ENCODE measurements at regions of chr3 and their contacts with region 1.

Region 1: DNA sequence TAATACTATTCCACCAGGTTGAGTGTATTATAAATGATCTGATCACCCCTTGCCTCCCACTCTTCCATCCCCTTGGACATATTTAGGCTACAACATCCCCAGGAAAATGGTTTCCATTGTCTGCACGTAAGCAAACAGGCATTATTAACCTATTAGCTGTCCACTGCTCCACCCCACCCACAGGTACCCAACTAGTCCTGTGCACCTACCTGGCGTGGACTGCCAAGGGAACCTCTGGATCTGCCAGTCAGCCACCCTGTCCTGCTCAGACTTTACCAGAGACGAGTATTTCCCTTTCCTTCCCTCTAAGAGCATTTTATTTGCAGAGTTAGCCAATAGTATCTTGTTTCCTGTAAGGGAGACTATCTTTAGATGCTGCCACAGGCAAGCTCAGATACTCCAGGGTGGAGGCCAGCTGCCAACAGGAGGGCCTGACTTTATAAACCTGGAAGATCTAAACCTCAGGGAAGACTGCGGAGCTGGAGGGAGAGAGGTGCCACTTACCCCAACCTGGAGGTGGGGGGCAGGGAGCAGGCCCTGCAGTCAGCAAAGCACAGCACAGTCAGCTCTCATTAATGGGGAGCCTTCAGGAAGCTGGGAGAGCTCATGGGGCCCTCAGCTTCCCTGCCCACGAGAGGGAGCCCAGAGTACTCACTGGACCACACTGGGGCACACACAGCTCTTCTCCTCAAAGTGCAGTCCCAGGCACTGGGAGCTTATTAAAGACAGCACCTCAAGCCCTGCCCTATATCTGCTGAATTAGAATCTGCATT is at the start of gene CX3CR1:
- DNase-seq: no peak
- H3K4me3 ChIP-seq: no peak within 1 kb of the TSS
- H3K27ac ChIP-seq: no peak within 1 kb of the TSS
- H3K4me1 ChIP-seq: no peaks in the 10 kb centered on the region
- H3K27me3 ChIP-seq: peaks cover 20% of the 10 kb centered on the region
- total RNA-seq, gene CX3CR1: not detected in 2 replicates

Region 2: DNA sequence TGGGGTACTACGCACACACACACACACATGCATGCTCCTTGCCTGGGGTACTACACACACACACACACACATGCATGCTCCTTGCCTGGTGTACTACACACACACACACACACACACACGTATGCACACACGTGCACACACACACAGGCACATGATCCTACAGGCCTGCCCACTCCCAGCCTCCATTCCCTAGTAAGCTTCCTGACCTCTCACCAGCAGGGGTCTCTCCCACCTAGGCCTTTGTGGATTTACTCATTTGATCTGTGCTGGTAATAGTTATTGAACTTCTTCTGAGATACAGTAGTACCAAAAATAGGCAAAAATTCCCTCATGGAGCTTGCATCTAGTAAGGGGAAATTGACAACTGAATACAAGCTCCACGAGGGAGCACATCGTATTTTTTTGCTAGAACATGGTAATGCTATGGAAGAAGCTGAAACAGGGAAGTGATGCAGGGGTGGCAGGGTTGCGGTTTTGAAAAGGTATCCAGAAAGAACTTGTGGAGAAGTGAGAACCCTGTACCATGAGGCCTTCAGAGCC is 153.3 kb before region 1 on chr3:
- in situ Hi-C with region 1: loop called (anchors 10 kb)
- DNase-seq: peak; percentile 51
- H3K4me3 ChIP-seq: no peak overlapping the region
- H3K27ac ChIP-seq: no peak overlapping the region
- H3K4me1 ChIP-seq: peaks cover 8% of the 10 kb centered on the region
- H3K27me3 ChIP-seq: no peaks in the 10 kb centered on the region

Region 3: DNA sequence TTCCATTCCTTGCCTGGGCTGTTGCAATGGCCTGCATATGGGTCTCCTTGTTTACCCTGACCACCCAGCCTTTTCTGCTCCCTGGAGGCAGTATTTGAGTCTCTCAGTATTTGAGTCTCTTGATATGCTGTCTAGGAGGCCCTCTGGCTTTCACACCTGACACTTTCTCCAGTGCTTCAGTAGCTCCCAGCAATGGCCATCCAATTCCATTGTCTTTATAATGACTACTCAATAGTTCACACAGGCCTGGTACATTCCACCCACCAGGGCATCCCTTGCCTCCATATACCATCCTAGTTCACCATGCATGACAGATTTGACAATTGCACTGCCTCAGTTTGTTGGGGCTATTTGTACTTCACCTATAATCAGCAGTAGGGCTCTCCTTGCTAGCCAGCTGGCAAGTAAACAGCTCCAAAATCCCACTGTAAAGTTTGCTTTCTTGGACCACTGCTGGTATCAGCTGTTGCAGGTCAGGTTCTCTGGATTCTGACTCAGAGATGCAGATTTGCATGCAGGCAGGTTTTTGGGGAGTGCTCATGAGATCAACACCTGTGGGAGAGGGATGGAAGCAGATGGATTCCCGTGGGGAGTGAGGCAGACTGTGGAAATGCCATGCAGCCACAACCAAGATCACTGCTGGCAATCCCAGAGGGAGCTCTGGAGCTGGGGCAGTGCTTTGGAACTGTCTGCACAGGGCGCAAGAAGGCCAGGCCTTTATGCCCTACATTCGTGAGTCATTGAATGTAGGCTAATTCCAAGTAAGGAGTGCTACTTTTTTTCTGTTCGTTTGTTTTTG is 68.4 kb before region 1 on chr3:
- in situ Hi-C with region 1: loop called (anchors 5 kb)
- DNase-seq: no peak
- H3K4me3 ChIP-seq: no peak overlapping the region
- H3K27ac ChIP-seq: no peak overlapping the region
- H3K4me1 ChIP-seq: no peaks in the 10 kb centered on the region
- H3K27me3 ChIP-seq: peaks cover 22% of the 10 kb centered on the region